ENCODE measurements at regions of chr10 and their contacts with region 1.

Region 1: GRCh38 chr10:80205478-80206276 is at the start of gene ANXA11:
- DNase-seq: peak; percentile 90 to 93
- ATAC-seq: peak; percentile 91
- H3K4me3 ChIP-seq: peak within 1 kb of the TSS; percentile 24 to 72
- H3K27ac ChIP-seq: peak within 1 kb of the TSS; percentile 83 to 97
- H3K4me1 ChIP-seq: peaks cover 2 to 10% of the 10 kb centered on the region in 2 donors
- H3K27me3 ChIP-seq: no peaks in the 10 kb centered on the region
- total RNA-seq, gene ANXA11: 227 to 256 TPM

Region 2: DNA sequence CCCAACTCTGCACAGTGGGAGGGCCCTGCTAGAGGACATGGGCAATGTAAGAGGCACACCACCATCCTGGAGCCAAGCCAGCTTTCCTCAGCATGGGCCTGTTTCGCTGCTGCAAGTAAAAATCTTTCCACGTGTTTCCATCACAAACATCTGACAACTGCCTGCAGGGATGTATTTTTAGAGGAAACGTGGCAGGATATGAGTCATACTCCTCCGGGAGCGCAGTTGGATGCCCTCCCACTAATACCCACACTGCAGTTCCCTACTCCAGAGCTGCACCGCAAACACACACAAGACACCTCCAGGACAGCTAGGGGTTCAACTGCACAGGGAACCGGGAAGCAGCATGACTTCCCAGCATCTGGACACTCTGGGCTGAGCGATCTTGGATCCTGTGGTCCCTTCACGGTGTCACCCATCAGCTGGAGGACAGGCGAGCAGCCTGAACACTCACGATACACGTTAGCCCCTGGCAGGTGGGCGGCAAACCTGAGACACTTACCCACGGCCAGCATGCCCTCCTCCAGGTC is 47.0 kb before region 1 on chr10:
- intact Hi-C with region 1: loop called (anchors 1 to 2 kb)
- DNase-seq: peak; percentile 94 to 96
- ATAC-seq: peak; percentile 93
- H3K4me3 ChIP-seq: no peak overlapping the region
- H3K27ac ChIP-seq: peak overlapping the region; percentile 16 to 96
- H3K4me1 ChIP-seq: peaks cover 11% of the 10 kb centered on the region in 2 donors
- H3K27me3 ChIP-seq: no peaks in the 10 kb centered on the region

Region 3: DNA sequence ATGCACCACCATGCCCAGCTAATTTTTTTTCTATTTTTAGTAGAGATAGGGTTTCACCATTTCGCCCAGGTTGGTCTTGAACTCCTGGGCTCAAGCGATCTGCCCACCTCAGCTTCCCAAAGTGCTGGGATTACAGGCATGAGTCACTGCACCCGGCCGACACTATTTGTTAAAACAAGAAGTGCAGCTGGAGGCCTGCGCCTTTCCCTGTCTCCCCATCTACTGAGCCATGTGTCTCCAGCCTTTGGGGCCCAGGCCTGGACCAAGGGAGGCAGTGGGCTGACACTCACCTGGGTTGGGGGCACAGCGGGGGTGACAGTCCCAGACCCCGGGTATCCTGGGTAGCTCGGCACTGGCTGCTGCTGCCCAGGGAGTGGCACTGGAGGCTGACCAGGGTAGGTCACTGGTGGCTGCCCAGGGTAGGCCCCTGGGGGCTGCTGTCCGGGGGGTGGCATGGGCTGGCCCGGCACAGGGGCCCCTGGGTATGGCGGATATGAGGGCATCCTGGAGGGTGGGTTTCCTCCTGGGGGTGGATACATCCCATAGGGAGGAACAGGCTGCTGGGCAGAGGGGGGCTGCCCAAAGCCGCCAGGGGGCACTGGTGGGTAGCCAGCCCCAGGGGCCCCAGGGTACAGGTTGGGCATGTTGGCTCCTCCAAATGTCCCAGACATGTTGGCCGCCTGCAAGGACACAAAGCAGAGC is 36.8 kb before region 1 on chr10:
- intact Hi-C with region 1: no loop called
- DNase-seq: no peak
- ATAC-seq: no peak
- H3K4me3 ChIP-seq: no peak overlapping the region
- H3K27ac ChIP-seq: peak overlapping the region in 1 of 2 donors; percentile 81
- H3K4me1 ChIP-seq: peaks cover 3 to 8% of the 10 kb centered on the region in 2 donors
- H3K27me3 ChIP-seq: no peaks in the 10 kb centered on the region

Region 4: DNA sequence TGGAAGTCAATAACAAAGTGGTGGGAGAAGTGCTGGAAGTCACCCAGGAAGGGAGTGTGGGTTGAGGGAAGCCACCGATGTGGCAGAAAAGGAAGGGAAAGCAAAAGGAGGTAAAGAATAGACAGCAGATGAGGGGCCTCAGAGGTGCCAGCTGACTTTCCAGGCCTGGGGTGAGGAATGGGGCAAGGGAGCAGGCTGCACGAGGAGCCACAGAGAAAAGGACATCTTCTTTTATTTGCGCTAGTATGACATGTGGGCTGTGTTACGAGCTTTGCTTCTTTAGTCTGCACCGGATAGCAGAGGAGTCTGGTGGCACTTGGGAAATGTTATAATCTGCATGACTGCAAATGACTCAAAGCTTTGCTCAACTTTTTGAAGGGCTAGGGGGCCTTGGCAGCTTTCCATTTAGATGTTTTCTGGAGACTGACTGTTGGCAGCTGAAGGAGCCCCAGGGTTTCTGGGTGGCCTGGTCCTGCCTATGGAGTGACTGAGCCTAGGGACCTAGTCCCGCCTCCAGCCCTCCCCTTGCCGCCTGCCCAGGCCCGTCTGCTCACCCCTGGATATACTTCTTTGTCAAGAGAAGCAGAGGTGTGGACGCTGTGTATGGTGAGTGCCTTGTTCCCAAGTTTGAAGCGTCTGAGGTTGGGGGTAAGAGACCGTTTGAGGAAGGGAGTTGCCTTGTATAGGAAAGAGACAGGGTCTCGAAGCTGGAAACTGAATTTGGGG is 207.8 kb after region 1 on chr10:
- intact Hi-C with region 1: no loop called
- DNase-seq: no peak
- ATAC-seq: no peak
- H3K4me3 ChIP-seq: no peak overlapping the region
- H3K27ac ChIP-seq: no peak overlapping the region
- H3K4me1 ChIP-seq: no peaks in the 10 kb centered on the region
- H3K27me3 ChIP-seq: no peaks in the 10 kb centered on the region

Measured in aorta (tissue), 5 donors.